ENCODE measurements at regions of chr11 and their contacts with region 1.

Region 1: DNA sequence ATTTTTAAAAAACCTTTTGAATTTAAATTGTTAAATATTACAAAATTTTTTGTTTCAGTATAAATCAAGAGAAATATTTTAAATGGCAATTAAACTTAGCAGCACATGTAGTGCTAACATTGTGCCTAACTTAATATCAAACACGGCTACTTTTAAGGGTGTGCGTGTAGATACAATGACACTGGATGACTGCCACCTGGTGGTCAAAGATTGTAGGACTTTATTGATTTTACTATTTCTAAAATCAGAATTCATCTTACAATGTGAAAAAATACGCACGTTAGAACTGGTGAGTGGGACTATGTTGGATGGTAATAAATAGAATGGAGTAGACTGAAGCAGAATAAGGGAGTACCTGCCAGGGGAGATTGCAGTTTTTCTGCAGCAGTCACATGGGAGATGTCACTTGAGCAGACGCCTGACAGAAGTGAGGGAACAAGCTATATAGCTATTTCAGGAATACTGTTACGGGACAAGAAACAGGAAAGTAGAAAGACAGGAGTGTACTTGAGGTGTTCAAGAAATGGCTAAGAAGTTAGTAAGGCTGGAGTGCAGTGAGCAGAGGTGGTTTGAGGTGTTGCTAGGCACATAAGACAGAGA is 52.9 kb downstream of the UVRAG start:
- DNase-seq: peak; percentile 60
- H3K4me3 Mint-ChIP-seq: no peak overlapping the region
- H3K27ac Mint-ChIP-seq: no peak overlapping the region
- H3K4me1 Mint-ChIP-seq: no peaks in the 10 kb centered on the region
- H3K27me3 Mint-ChIP-seq: no peaks in the 10 kb centered on the region
- CTCF ChIP-seq: peak; percentile 41

Region 2: DNA sequence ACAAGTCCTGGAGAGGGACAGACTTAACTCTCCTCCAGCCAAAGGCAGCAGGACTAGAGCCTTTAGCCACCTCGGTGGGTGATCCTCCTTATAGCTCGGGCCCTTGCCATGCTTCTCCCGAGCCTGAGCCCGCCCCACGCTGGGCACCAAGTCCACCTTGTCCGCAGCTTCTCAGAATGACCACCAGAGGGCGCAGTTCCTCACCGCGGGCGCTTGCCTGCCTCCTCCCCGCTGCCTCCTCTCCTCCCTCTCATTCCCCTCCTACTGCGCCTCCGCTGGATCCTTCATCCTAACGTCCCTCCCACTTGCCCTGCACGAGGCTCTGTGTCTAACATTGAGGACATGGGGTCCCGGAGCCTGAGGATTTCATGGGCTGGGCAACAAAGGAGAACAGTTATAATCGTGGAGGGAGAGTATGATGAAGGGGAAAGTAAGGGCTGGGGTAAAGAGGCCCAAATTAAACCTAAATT is 161.6 kb before region 1 on chr11:
- CTCF ChIA-PET with region 1: interaction called, 12 read pairs
- POLR2A ChIA-PET with region 1: no interaction called
- intact Hi-C with region 1: no loop called
- DNase-seq: peak; percentile 82
- H3K4me3 Mint-ChIP-seq: no peak overlapping the region
- H3K27ac Mint-ChIP-seq: no peak overlapping the region
- H3K4me1 Mint-ChIP-seq: peaks cover 13% of the 10 kb centered on the region
- H3K27me3 Mint-ChIP-seq: no peaks in the 10 kb centered on the region
- CTCF ChIP-seq: peak; percentile 91

Region 3: GRCh38 chr11:75722669-75723042 is 145.2 kb before region 1 on chr11:
- CTCF ChIA-PET with region 1: interaction called, 5 read pairs
- POLR2A ChIA-PET with region 1: no interaction called
- intact Hi-C with region 1: loop called (anchors 1 kb)
- DNase-seq: no peak
- H3K4me3 Mint-ChIP-seq: no peak overlapping the region
- H3K27ac Mint-ChIP-seq: no peak overlapping the region
- H3K4me1 Mint-ChIP-seq: no peaks in the 10 kb centered on the region
- H3K27me3 Mint-ChIP-seq: no peaks in the 10 kb centered on the region
- CTCF ChIP-seq: no peak

Region 4: DNA sequence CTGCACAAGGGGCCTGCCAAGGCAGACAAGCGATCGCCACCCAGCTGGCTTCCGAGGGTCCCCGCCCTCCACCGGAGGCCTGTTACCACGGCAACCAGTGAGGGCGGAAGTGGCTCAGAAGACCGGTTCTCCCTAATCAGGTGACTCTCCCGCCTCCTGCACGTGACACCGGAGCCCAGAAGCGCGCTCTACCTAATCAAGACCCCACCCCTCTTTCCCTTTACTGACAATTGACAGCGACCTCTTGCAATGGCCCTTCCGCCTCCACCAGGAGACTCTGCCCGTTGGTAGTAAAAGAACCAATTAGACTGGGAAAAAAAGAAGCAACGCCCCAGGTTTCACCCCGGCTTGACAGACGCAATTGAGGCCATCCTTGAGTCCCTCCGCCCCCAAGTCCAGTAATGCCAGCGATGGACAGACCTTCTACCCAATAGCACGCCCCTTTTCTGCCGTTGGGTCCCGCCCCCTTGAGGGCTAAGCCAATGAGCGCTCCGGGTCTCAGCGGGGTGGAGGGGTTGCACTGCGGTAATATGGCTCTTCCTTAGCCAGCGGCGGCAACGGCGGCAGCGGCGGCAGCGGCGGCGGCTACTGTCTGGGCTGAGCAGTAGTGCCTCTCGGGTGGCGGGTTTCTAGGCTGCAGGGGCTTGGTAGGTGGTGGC is 53.1 kb before region 1 on chr11 and contains the start of gene UVRAG:
- CTCF ChIA-PET with region 1: interaction called, 39 read pairs
- POLR2A ChIA-PET with region 1: interaction called, 3 read pairs
- intact Hi-C with region 1: loop called (anchors 5 kb)
- DNase-seq: peak; percentile 100
- H3K4me3 Mint-ChIP-seq: no peak within 1 kb of the TSS
- H3K27ac Mint-ChIP-seq: no peak within 1 kb of the TSS
- H3K4me1 Mint-ChIP-seq: peaks cover 11% of the 10 kb centered on the region
- H3K27me3 Mint-ChIP-seq: no peaks in the 10 kb centered on the region
- CTCF ChIP-seq: no peak
- total RNA-seq, gene UVRAG: 12.4 and 16.1 TPM in 2 replicates

Region 5: GRCh38 chr11:75831915-75832502 is 35.9 kb before region 1 on chr11:
- CTCF ChIA-PET with region 1: interaction called, 16 read pairs
- POLR2A ChIA-PET with region 1: no interaction called
- intact Hi-C with region 1: no loop called
- DNase-seq: no peak
- H3K4me3 Mint-ChIP-seq: no peak overlapping the region
- H3K27ac Mint-ChIP-seq: no peak overlapping the region
- H3K4me1 Mint-ChIP-seq: peaks cover 8% of the 10 kb centered on the region
- H3K27me3 Mint-ChIP-seq: no peaks in the 10 kb centered on the region
- CTCF ChIP-seq: no peak

Region 6: GRCh38 chr11:76577199-76577920 is 709.5 kb after region 1 on chr11:
- CTCF ChIA-PET with region 1: no interaction called
- POLR2A ChIA-PET with region 1: no interaction called
- intact Hi-C with region 1: no loop called
- DNase-seq: peak; percentile 87
- H3K4me3 Mint-ChIP-seq: no peak overlapping the region
- H3K27ac Mint-ChIP-seq: peak overlapping the region; percentile 77
- H3K4me1 Mint-ChIP-seq: peaks cover 30% of the 10 kb centered on the region
- H3K27me3 Mint-ChIP-seq: no peaks in the 10 kb centered on the region
- CTCF ChIP-seq: no peak